Calu3 (cell line): ENCODE measurements at regions of chr15 and their contacts with region 1.

Region 1: GRCh38 chr15:54289590-54290136 is 311.4 kb downstream of the UNC13C start:
- DNase-seq: no peak
- H3K4me3 Mint-ChIP-seq: no peak overlapping the region
- H3K27ac Mint-ChIP-seq: no peak overlapping the region
- H3K4me1 Mint-ChIP-seq: no peaks in the 10 kb centered on the region
- H3K27me3 Mint-ChIP-seq: no peaks in the 10 kb centered on the region
- CTCF ChIP-seq: no peak

Region 2: DNA sequence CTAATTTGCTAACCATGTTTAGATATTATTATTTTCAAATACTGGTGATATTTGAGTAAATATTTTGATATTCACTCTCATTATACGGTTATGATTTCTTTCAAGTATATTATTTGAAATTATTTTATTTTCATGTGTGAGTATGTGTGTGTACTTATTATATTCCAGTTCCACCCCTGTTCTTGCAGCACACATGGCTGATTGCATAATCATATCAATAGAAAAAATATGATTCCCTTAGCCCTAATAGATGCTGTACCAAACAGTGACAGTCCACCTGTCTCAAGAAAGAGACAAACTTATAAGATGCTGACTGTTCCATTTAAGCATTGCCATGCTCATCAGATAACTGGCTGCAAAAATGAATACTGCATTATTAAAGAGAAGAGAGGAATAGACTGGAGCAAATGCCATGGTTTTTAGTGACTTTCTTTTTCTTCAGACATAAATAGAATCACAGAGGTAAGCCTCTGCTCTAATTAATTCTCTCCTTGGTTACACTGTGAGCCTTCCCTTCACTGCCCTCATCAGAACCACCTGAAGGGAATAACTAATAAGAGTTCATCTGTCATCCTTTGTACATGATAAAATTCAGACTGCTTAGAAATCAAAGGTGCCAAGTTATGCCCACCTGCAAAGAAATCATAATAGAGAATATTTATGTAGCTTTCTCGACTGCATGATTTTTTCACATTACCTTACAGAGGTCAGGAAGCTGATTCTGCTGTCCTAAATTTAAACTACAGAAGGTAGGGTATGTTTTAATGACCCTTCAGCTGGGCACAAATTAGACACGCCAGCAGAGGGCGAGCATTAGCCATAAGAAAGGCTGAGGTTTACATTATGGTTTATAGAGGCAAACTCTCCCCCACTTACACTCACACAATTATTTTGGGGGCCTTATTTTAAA is 327.1 kb before region 1 on chr15:
- CTCF ChIA-PET with region 1: no interaction called
- intact Hi-C with region 1: loop called (anchors 10 kb)
- DNase-seq: peak; percentile 67
- H3K4me3 Mint-ChIP-seq: no peak overlapping the region
- H3K27ac Mint-ChIP-seq: no peak overlapping the region
- H3K4me1 Mint-ChIP-seq: no peaks in the 10 kb centered on the region
- H3K27me3 Mint-ChIP-seq: no peaks in the 10 kb centered on the region
- CTCF ChIP-seq: peak; percentile 73